Mammary epithelial cell (primary cell): ENCODE measurements at regions of chr5 and their contacts with region 1.

Region 1: DNA sequence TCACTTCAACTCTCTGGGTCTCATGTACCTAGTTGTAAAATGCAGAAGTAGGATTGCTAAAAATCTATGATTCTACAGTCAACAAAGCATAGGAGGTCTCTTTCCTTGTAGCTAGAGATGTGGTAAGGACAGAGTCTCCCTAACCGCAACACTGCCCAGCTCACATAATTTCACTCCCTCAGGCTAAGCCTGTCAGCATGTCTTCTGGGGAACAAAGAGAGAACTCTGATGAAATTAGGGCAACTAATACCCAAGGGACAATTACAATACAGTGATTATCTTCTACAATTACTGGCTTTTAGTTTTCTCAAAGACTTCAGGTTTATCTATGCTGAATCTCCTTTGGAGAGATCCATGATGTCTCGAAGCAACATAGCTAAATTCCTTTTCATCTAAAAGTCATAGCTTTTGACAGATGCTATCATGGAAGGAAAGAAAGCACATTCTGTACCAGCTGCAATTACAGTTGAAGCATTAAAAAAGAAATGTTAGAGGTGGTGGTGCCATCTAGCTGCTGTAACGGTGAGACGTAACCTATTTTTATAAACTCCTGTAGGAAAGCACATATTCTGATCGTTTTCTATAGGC is 141.1 kb upstream of the TARS1 start:
- DNase-seq: peak; percentile 90
- H3K4me3 ChIP-seq: peak overlapping the region in 1 of 3 experiments; percentile 3
- H3K27ac ChIP-seq: peak overlapping the region; percentile 79
- H3K4me1 ChIP-seq: peaks cover 21% of the 10 kb centered on the region
- H3K27me3 ChIP-seq: no peaks in the 10 kb centered on the region
- CTCF ChIP-seq: peak; percentile 43 to 56

Region 2: DNA sequence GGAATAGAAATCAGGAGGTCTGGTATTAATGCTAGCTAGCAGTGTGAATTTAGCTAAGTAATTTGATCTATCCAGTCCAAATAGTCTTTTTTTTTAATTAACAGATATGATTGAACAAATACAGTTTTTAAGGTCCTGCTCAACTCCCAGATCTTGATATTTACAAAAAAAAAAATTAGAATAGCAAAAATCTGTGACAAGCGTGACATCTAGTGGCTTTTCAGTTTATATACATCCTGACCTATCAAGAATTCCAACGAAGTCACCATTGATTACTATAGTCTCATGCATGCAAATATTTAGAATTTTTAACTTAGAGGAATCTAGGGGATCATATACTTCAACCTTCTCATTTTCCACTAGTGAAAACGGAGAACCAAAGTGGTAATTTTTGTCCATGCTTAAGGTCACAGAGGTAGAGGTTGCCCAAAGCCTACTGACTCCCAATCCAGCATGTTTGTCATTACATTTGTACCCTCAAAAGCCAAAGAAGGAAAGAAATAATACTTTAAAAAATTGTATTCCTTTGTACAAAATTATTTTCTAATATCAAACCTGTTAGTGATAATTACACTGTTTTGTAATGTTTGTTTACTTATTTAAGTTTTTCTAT is 123.4 kb after region 1 on chr5:
- CTCF ChIA-PET with region 1: no interaction called
- dilution Hi-C with region 1: no loop called
- in situ Hi-C with region 1: no loop called
- intact Hi-C with region 1: loop called (anchors 2 kb)
- DNase-seq: no peak
- H3K4me3 ChIP-seq: no peak overlapping the region
- H3K27ac ChIP-seq: no peak overlapping the region
- H3K4me1 ChIP-seq: no peaks in the 10 kb centered on the region
- H3K27me3 ChIP-seq: no peaks in the 10 kb centered on the region
- CTCF ChIP-seq: peak; percentile 27 to 51